HepG2 (cell line): ENCODE measurements at regions of chr16 and their contacts with region 1.

Region 1: DNA sequence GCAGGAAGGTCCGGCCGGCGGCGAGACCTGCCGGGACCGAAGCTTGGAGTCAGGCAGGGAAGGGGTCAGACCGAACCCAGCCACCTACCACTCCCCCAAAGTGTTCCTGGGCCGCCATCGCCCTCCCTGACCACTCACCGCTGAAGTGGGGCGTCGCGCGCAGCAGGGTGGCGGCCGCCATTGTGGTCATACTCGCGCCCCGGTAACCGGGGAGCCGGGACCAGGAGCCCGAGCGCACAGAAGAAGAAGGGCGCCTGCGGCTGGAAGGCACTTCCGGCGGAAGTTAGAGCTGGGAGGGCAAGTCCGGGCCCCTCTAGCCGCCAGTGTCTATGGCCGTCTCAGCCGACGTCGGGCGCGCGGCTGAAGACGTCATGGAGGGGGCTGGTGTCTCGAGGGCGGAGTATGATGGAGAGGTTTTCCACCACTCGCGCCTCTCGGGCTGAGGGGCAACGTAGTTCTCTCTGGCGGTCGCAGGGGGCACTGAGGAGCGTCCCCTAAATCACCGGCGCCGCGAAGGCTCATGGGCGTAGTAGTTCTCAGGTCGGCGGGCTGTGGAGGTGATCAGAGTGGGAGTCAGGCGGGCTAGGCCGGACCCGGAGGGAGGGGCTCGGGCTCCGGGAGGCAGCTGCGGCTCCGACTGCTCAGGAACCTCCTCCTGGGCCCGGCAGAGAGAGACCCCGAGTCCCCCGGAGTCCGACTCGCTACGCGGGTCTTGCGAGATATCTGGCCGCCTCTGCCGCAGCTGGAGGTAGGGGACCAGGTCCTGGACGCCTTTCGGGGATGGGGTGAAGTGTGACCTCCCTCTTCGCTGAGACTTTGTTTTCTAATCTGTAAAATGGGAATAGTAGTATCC is at the start of gene TUFM:
- DNase-seq: peak; percentile 99
- ATAC-seq: peak; percentile 87
- H3K4me3 ChIP-seq: peak within 1 kb of the TSS; percentile 75 to 97 (median 87)
- H3K27ac ChIP-seq: peak within 1 kb of the TSS; percentile 69
- H3K4me1 ChIP-seq: peaks cover 18% of the 10 kb centered on the region
- H3K27me3 ChIP-seq: no peaks in the 10 kb centered on the region; a peak in 1 of 5 replicates
- CTCF ChIP-seq: peak; percentile 98
- EP300 ChIP-seq: peak; percentile 47 to 73; a peak in 3 of 4 replicates
- POLR2A ChIP-seq: peak; percentile 58 to 66; a peak in 3 of 4 replicates
- RAD21 ChIP-seq: peak; percentile 47
- total RNA-seq, gene TUFM: 138 and 298 TPM in 2 replicates

Region 2: DNA sequence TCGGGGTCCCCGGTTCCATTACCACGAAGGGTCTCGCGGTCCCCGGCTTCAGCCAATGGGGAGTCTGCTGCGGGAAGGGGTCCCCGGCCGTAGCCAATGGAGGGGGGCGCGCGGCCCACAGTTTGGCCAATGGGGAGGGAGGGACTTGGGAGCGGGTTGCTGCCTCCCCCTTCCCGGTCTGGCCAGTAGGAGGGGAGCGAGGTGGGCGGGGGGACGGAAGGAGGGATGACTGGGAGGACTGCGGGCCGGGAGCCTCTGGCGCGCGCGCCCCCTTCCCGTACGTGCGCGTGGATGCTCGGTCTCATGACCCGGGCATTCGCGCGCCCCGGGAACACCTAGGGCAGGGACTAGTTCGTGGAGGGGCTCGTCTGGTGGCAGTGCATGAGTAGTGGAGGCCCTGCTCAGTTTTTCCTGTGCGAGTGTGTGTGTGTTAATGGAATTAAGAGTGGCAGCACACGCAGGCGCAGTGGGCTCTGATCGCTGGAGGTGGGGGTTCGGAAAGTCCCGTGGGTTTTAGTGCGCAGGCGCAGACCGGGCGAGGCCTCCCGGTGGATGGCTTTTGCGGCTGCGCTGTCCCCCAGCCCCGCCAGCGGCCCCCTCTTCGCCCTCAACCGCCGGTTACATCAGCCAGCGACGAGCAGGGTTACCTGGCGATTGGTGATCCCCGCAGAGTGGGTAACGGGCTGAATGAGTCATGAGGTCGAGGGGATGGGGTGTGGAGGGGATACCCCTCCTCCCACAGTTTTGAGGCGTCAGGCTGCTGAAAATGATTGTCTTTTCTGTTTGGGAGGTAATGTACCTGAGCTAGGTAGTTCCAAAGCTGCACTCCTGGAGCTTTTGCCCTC is 22.2 kb before region 1 on chr16:
- CTCF ChIA-PET with region 1: no interaction called
- POLR2A ChIA-PET with region 1: interaction called, 76 read pairs
- in situ Hi-C with region 1: no loop called
- intact Hi-C with region 1: loop called (anchors 2 kb)
- DNase-seq: peak; percentile 97
- ATAC-seq: peak; percentile 91
- H3K4me3 ChIP-seq: peak overlapping the region; percentile 77 to 99 (median 89)
- H3K27ac ChIP-seq: peak overlapping the region; percentile 97
- H3K4me1 ChIP-seq: peaks cover 52% of the 10 kb centered on the region
- H3K27me3 ChIP-seq: no peaks in the 10 kb centered on the region; a peak in 1 of 5 replicates
- CTCF ChIP-seq: peak; percentile 57
- EP300 ChIP-seq: peak in 1 of 2 experiments; percentile 6; a peak in 1 of 4 replicates
- POLR2A ChIP-seq: peak; percentile 71 to 76
- RAD21 ChIP-seq: no peak

Region 3: DNA sequence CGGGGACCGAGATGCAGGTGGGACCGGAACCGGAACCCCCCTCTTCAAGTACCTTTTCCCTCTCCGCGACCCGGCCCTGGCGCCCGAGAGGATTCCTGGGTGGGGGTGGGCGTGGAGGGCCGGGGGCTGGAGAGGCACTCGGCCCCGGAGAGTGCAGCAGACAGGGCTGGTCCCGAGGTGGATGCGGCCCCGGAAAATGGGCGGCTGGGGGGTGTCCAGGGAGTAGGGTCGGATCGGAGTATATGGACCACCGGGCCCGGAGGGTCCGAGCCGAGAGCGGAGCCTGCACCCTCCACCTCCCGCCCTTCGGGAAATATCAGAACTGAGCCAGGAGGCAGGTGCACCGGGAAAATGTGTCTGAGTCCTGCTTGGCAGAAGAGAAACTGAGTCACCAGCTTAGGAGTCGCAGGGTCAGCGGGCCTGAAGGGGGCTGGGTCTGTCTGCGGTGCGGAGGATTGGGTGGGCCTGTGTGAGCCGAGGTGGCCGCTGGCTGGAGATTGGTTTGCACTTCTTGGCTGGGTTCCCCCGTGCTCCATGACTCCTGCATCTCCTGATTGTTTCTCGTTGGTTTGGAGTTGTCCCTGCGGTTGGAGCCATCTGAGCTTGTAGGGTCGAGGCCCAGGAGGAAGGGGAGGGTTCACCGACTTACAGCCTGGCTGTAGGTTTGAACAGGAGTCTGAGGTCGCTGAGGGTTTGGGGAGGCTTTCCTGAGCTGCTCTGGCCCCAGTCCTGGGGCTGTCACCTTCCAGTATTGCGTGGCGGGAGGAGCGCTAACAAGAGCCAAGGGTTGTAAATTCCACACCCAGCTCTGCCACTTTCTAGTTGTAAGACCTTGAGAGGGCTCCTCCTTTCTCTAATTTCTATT is 17.9 kb after region 1 on chr16:
- CTCF ChIA-PET with region 1: no interaction called
- POLR2A ChIA-PET with region 1: interaction called, 104 read pairs
- in situ Hi-C with region 1: no loop called
- intact Hi-C with region 1: loop called (anchors 1 kb)
- DNase-seq: no peak
- ATAC-seq: peak; percentile 36
- H3K4me3 ChIP-seq: peak overlapping the region; percentile 85 to 98 (median 95)
- H3K27ac ChIP-seq: peak overlapping the region; percentile 99
- H3K4me1 ChIP-seq: peaks cover 36% of the 10 kb centered on the region
- H3K27me3 ChIP-seq: no peaks in the 10 kb centered on the region; a peak in 1 of 5 replicates
- CTCF ChIP-seq: no peak
- EP300 ChIP-seq: no peak; a peak in 1 of 4 replicates
- POLR2A ChIP-seq: no peak
- RAD21 ChIP-seq: no peak

Region 4: DNA sequence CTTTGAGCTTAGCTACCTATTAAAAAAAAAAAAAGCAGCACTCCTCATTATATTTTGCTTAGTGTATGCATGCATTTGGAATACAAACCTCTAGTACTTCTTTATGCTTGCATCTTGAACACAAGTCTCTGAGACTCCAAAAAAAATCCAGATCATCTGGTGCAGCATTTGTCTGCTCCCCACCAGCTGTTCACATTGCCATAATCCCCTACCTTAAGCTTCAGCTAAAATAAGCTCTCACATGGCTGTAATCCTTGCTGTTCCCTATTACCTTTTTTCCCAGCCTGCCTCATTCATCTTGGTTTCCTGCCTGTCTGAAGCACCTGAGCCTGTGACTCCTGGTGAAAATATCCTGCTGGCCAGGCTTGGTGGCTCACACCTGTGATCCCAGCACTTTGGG is 97.0 kb after region 1 on chr16:
- CTCF ChIA-PET with region 1: interaction called, 3 read pairs
- POLR2A ChIA-PET with region 1: interaction called, 12 read pairs
- in situ Hi-C with region 1: no loop called
- intact Hi-C with region 1: loop called (anchors 1 kb)
- DNase-seq: no peak
- ATAC-seq: no peak
- H3K4me3 ChIP-seq: no peak overlapping the region
- H3K27ac ChIP-seq: no peak overlapping the region
- H3K4me1 ChIP-seq: peaks cover 28% of the 10 kb centered on the region
- H3K27me3 ChIP-seq: no peaks in the 10 kb centered on the region
- CTCF ChIP-seq: no peak
- EP300 ChIP-seq: no peak
- POLR2A ChIP-seq: no peak
- RAD21 ChIP-seq: no peak

Region 5: GRCh38 chr16:28974437-28975157 is 128.3 kb after region 1 on chr16 and contains the start of gene SPNS1:
- CTCF ChIA-PET with region 1: no interaction called
- POLR2A ChIA-PET with region 1: interaction called, 10 read pairs
- in situ Hi-C with region 1: no loop called
- intact Hi-C with region 1: no loop called
- DNase-seq: peak; percentile 94
- ATAC-seq: peak; percentile 91
- H3K4me3 ChIP-seq: peak within 1 kb of the TSS; percentile 93 to 100 (median 100)
- H3K27ac ChIP-seq: peak within 1 kb of the TSS; percentile 60
- H3K4me1 ChIP-seq: peaks cover 24% of the 10 kb centered on the region
- H3K27me3 ChIP-seq: no peaks in the 10 kb centered on the region; a peak in 1 of 5 replicates
- CTCF ChIP-seq: peak; percentile 29; the same call in 1 of the 2 replicates
- EP300 ChIP-seq: peak in 1 of 2 experiments; percentile 42; a peak in 1 of 4 replicates
- POLR2A ChIP-seq: peak; percentile 88 to 89
- RAD21 ChIP-seq: peak; percentile 58; the same call in 1 of the 2 replicates
- total RNA-seq, gene SPNS1: 18.3 and 38.8 TPM in 2 replicates